Heart right ventricle (tissue), 16 donors: ENCODE measurements at regions of chr11 and their contacts with region 1.

Region 1: GRCh38 chr11:32374261-32374711 is 61.1 kb downstream of the WT1 start:
- DNase-seq: peak in 1 of 2 donors; percentile 31
- ATAC-seq: peak in 2 of 8 donors; percentile 41 to 61
- H3K4me3 ChIP-seq: no peak overlapping the region
- H3K27ac ChIP-seq: no peak overlapping the region
- H3K4me1 ChIP-seq: no peaks in the 10 kb centered on the region
- H3K27me3 ChIP-seq: peaks cover 0 to 7% (median 0%) of the 10 kb centered on the region in 7 donors
- CTCF ChIP-seq: peak; percentile 32 to 68 (median 56)

Region 2: DNA sequence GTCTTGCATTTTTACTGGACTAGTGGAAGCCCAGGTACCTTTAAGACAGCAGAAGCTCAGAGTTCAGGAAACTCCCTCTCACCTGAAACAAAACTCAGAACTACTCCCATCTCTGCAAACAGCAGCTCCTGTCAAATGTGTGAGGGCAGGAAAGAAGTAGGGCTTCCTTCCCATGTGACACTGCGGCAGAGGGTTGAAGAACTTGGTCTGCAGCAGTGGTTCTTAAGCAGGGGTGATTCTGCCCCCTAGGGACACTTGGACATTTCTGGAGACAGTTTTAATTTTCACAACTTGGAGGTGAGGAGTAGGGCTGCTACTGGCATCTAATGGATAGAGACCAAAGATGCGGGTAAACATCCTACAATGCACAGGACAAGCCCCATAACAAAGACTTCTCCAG is 220.0 kb before region 1 on chr11:
- intact Hi-C with region 1: no loop called
- DNase-seq: no peak
- ATAC-seq: no peak
- H3K4me3 ChIP-seq: no peak overlapping the region
- H3K27ac ChIP-seq: peak overlapping the region in 1 of 10 donors; percentile 74
- H3K4me1 ChIP-seq: peaks cover 0 to 35% (median 0%) of the 10 kb centered on the region in 9 donors
- H3K27me3 ChIP-seq: peaks cover 0 to 6% (median 0%) of the 10 kb centered on the region in 7 donors
- CTCF ChIP-seq: no peak

Region 3: GRCh38 chr11:32310199-32310571 is 64.1 kb before region 1 on chr11:
- intact Hi-C with region 1: no loop called
- DNase-seq: no peak
- ATAC-seq: no peak
- H3K4me3 ChIP-seq: no peak overlapping the region
- H3K27ac ChIP-seq: no peak overlapping the region
- H3K4me1 ChIP-seq: no peaks in the 10 kb centered on the region
- H3K27me3 ChIP-seq: peaks cover 0 to 35% (median 4%) of the 10 kb centered on the region in 7 donors
- CTCF ChIP-seq: no peak

Region 4: DNA sequence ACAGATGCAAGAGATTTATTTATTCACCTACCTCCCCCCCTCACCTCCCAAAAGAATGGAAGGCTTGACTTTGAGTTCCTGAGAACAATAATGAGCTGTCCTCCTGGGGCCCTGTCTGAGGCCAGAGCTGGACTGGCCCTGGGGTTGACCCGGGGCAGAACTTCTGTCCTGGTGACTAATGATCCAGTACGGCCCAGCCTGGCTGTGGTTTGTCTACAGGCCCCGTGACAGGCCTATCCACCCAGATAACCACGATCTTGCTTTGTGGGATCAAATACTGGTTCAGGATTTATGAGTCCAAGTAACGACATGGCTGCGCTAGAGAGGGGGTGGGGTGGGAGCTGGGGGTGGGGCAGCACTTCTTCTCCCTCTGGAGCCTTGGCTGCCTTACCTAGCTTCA is 20.4 kb before region 1 on chr11:
- intact Hi-C with region 1: loop called in 1 of 10 experiments (anchors 1 kb)
- DNase-seq: no peak
- ATAC-seq: no peak
- H3K4me3 ChIP-seq: no peak overlapping the region
- H3K27ac ChIP-seq: no peak overlapping the region
- H3K4me1 ChIP-seq: no peaks in the 10 kb centered on the region
- H3K27me3 ChIP-seq: peaks cover 0 to 34% (median 31%) of the 10 kb centered on the region in 7 donors
- CTCF ChIP-seq: no peak

Region 5: DNA sequence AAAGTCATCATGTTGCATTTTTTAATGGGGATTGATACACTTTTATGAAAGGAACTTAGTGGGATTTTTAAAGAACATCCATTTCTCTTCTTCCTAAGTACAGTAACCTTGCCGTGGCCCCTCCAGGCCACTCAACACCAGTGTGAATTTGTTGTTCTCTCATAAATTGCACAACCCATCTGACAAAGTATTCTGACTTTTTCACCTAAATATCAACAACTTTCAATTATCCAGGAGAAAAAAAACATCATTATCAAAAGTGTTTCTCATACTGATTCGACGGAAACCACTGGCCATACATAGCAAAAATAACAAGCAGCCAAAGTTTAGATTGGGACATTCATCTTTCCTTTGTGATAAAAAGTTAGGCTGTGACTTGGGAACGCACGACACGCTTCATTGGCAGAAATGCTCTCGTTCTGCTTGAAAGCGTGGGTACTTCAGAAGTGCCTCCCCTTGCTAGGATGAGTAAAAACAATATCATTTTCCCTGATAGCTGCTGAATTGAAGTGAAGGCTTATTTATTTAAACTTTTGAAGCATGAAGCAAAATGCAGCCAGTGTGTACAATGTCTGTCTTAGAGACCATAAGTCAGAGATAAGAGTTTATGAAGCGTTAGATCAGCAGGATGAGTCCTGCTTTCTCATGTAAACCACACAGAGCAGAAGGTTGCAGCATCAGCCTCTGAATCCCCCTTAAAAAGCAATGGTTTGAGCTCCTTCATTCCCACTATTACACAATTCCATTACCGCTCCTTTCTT is 188.7 kb after region 1 on chr11:
- intact Hi-C with region 1: loop called in 2 of 10 experiments (anchors 5 to 10 kb)
- DNase-seq: no peak
- ATAC-seq: no peak
- H3K4me3 ChIP-seq: no peak overlapping the region
- H3K27ac ChIP-seq: no peak overlapping the region
- H3K4me1 ChIP-seq: peaks cover 0 to 5% (median 0%) of the 10 kb centered on the region in 9 donors
- H3K27me3 ChIP-seq: peaks cover 0 to 4% (median 0%) of the 10 kb centered on the region in 7 donors
- CTCF ChIP-seq: no peak